ENCODE measurements at regions of chr10 and their contacts with region 1.

Region 1: DNA sequence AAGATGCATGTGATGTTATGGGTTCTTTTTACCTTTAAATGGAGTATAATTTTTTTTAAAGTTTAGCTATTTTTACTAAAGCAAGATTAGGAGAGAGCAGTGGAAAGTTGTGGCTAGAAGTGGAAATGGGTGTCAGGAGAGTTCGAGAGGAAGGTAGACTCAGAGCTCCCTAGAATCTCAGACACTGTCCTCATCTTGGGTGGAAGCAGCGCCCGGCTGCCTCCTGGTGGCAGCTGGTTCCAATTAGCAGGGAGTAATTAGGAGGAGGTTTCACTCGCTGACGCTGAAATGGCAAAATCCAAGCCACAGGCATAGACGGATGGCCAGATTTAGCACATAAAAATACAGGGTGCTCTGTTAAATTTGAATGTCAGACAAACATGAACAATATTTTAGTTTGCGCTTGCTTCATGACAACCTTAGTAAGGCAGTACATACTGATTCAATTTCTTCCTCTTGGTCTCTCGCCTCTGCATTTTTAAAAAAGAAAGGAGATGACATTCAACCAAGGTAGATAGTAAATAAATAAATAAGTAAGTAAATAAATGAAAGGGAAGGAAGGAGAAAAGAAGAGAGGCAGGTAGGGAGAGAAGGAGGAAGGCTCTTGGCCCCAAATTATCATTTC is 58.5 kb downstream of the LGI1 start:
- DNase-seq: peak; percentile 10
- H3K4me3 Mint-ChIP-seq: no peak overlapping the region
- H3K27ac Mint-ChIP-seq: no peak overlapping the region
- H3K4me1 Mint-ChIP-seq: peaks cover 3% of the 10 kb centered on the region
- H3K27me3 Mint-ChIP-seq: peaks cover 34% of the 10 kb centered on the region

Region 2: GRCh38 chr10:93554760-93555432 is 261.3 kb before region 1 on chr10:
- intact Hi-C with region 1: loop called (anchors 10 kb)
- DNase-seq: peak; percentile 20
- H3K4me3 Mint-ChIP-seq: no peak overlapping the region
- H3K27ac Mint-ChIP-seq: no peak overlapping the region
- H3K4me1 Mint-ChIP-seq: no peaks in the 10 kb centered on the region
- H3K27me3 Mint-ChIP-seq: no peaks in the 10 kb centered on the region

Region 3: DNA sequence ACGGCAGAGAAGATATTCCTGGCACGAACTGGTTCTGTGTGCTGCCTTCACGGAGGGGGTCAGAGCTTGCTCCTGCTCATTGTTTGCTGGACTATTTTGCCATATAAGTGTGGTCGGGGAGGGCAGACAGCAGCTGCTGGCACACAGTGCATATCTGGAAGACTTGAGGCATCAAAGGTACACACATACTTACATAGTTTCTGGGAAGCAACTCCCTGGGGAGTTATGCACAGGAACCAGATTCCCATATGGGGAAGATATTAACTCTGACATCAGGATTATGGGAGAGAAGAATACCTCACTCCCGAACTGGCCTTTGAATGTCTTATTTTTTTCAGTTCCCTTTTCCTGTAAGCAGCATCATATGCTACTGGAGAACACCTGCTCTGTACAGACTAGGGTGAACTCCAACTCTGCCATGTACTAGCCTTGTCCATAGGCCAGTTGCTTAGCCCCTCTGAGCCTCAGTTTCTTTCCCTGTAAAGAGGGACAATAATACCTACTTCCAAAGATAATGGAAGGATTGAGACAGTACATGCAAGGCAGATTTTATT is 17.0 kb before region 1 on chr10:
- intact Hi-C with region 1: no loop called
- DNase-seq: no peak
- H3K4me3 Mint-ChIP-seq: no peak overlapping the region
- H3K27ac Mint-ChIP-seq: no peak overlapping the region
- H3K4me1 Mint-ChIP-seq: no peaks in the 10 kb centered on the region
- H3K27me3 Mint-ChIP-seq: peaks cover 18% of the 10 kb centered on the region

Region 4: DNA sequence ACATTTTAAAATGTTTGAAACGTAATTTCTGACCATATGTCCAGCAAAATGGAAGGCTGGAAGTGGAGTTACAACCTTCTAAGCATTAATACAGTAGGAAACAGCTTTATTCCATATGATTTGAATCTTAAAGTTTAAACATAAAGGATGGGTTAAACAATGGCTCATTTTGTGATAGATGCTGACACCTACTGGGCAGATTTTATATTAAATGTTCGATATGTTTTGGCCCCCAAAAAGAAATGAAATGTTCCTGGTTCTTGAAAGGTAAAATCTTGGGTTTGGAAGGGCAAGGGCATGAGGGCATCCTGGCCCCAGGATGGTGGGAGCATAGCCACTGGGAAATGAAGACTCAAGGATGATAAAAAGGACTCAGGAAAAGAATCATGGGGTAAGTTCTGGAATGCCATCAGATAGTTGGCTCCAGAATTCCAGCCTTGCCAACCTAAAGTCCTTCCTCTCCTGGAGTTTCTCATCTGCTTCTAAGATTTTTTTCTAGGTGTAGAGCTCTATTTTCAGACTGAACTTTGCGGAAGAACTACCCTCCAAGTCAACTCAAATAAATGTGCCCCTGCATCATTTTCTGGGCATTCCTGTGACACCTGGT is 42.9 kb after region 1 on chr10:
- intact Hi-C with region 1: loop called (anchors 5 kb)
- DNase-seq: no peak
- H3K4me3 Mint-ChIP-seq: no peak overlapping the region
- H3K27ac Mint-ChIP-seq: no peak overlapping the region
- H3K4me1 Mint-ChIP-seq: no peaks in the 10 kb centered on the region
- H3K27me3 Mint-ChIP-seq: no peaks in the 10 kb centered on the region

Region 5: DNA sequence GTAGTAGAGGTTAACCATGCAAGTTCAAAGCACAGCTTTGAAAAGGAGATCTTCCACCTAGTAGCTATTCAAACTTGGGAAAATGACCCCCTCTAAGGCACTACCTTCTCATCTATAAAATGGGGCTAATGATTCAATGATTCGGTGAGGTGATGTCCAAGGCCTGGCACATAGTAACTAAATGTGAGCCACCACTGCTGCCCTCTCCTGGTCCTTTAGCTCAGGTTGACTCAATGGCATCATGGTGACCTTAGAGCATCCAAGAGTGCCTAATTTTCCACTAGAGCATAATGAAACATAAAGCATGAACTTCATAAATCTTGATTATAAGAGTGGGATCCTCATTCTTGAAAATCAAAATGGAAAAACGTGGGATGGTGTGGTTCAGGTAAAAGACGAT is 161.2 kb after region 1 on chr10:
- intact Hi-C with region 1: no loop called
- DNase-seq: no peak
- H3K4me3 Mint-ChIP-seq: no peak overlapping the region
- H3K27ac Mint-ChIP-seq: no peak overlapping the region
- H3K4me1 Mint-ChIP-seq: no peaks in the 10 kb centered on the region
- H3K27me3 Mint-ChIP-seq: peaks cover 1% of the 10 kb centered on the region

Region 6: GRCh38 chr10:93993782-93994437 is 177.7 kb after region 1 on chr10 and contains the start of gene PLCE1:
- intact Hi-C with region 1: no loop called
- DNase-seq: no peak
- H3K4me3 Mint-ChIP-seq: peak within 1 kb of the TSS; percentile 59
- H3K27ac Mint-ChIP-seq: no peak within 1 kb of the TSS
- H3K4me1 Mint-ChIP-seq: peaks cover 1% of the 10 kb centered on the region
- H3K27me3 Mint-ChIP-seq: peaks cover 60% of the 10 kb centered on the region
- total RNA-seq, gene PLCE1: 0.02 TPM in 2 replicates